Calu3 (cell line): ENCODE measurements at regions of chr20 and their contacts with region 1.

Region 1: GRCh38 chr20:9884061-9884460 is 45.2 kb upstream of the PAK5 start:
- DNase-seq: peak; percentile 5
- H3K4me3 Mint-ChIP-seq: no peak overlapping the region
- H3K27ac Mint-ChIP-seq: no peak overlapping the region
- H3K4me1 Mint-ChIP-seq: no peaks in the 10 kb centered on the region
- H3K27me3 Mint-ChIP-seq: peaks cover 9% of the 10 kb centered on the region
- CTCF ChIP-seq: no peak

Region 2: DNA sequence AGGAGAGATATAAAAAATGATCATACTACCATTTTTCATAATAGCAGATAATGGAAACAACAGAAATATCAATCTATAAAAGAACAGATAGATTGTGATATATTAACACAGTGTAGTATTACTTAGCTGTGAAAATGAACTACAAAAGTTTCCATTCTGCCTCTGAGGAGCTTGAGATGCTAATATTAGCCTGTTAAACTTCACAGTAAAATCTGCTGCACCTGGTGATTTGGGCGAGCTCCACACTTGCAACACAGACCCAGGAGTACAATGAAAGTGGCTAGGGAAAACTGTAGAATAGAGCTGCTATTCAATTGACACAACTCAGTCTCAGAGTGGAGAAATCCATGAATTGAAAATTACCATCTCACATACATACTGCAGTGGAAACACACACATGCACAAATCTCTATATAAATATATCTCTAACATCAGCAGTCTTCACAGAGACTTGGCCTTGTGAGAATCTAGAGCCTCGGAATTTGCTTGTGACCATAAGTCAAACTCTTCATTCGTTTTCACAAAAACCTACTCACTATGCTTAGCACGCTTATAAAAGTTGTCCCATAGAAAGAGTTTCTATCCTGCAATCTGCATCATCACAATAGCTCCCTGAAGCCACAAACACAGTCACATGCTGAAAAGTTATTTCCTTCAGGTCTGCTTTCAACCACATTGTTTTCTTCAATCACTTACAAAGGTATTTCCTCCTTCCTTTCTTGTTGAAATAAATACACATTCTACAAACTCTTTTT is 178.2 kb before region 1 on chr20:
- CTCF ChIA-PET with region 1: no interaction called
- intact Hi-C with region 1: loop called (anchors 10 kb)
- DNase-seq: no peak
- H3K4me3 Mint-ChIP-seq: no peak overlapping the region
- H3K27ac Mint-ChIP-seq: no peak overlapping the region
- H3K4me1 Mint-ChIP-seq: no peaks in the 10 kb centered on the region
- H3K27me3 Mint-ChIP-seq: peaks cover 18% of the 10 kb centered on the region
- CTCF ChIP-seq: no peak